Caco-2 (cell line): ENCODE measurements at regions of chr2 and their contacts with region 1.

Region 1: GRCh38 chr2:216059233-216059834 is 22.3 kb downstream of the PECR start:
- DNase-seq: no peak
- H3K4me3 ChIP-seq: no peak overlapping the region
- H3K4me3 Mint-ChIP-seq: no peak overlapping the region
- H3K27ac Mint-ChIP-seq: no peak overlapping the region
- H3K4me1 ChIP-seq: peaks cover 14% of the 10 kb centered on the region
- H3K4me1 Mint-ChIP-seq: peaks cover 5% of the 10 kb centered on the region
- H3K27me3 ChIP-seq: no peaks in the 10 kb centered on the region
- H3K27me3 Mint-ChIP-seq: no peaks in the 10 kb centered on the region
- CTCF ChIP-seq: peak in 1 of 2 experiments; percentile 31

Region 2: GRCh38 chr2:216031960-216032689 is 27.2 kb before region 1 on chr2:
- CTCF ChIA-PET with region 1: no interaction called
- POLR2A ChIA-PET with region 1: no interaction called
- intact Hi-C with region 1: loop called (anchors 1 kb)
- DNase-seq: no peak
- H3K4me3 ChIP-seq: no peak overlapping the region
- H3K4me3 Mint-ChIP-seq: no peak overlapping the region
- H3K27ac Mint-ChIP-seq: no peak overlapping the region
- H3K4me1 ChIP-seq: no peaks in the 10 kb centered on the region
- H3K4me1 Mint-ChIP-seq: no peaks in the 10 kb centered on the region
- H3K27me3 ChIP-seq: no peaks in the 10 kb centered on the region
- H3K27me3 Mint-ChIP-seq: no peaks in the 10 kb centered on the region
- CTCF ChIP-seq: no peak

Region 3: DNA sequence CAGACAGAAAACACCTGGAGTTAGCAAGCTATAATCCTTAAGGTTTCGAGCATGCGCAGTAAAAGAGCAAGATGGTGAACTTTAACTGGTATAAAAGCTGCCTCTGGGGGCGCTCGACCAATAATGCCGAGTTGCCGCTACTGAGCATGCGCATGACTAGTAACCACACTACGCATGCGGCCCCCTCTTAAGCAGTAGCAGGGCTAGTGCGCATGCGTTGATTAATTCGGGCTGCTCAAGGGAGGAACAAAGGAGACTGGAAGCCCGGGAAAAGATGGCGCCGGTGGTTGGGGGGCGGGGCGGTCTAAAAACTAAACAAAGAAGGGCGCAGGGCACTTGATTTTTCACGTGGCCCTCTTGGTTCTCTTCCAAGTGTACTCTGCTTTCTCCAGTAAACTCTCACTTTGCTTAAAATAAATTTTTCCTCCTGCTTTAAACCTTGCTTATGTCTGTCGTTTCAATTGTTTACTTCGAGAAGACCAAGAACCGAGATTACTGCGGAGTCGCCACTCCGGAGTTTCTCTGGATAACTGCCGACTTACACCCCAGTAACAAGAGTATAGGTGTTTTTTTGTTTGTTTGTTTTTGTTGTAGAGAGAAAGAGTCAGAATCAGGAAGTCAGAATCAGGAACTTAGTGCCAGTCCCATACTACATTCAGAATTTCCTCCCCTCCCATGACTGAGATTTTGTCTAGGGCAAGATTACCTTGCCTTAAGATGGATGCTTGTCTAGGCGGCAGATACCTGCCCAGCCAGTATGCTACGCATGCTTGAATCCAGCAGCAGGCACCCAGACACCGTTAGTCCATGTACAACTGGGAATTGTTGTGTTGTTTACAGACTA is 55.6 kb after region 1 on chr2:
- CTCF ChIA-PET with region 1: interaction called, 7 read pairs
- POLR2A ChIA-PET with region 1: no interaction called
- intact Hi-C with region 1: loop called (anchors 1 kb)
- DNase-seq: peak; percentile 98 to 99
- H3K4me3 ChIP-seq: peak overlapping the region; percentile 33
- H3K4me3 Mint-ChIP-seq: peak overlapping the region; percentile 92
- H3K27ac Mint-ChIP-seq: peak overlapping the region; percentile 97
- H3K4me1 ChIP-seq: peaks cover 35% of the 10 kb centered on the region
- H3K4me1 Mint-ChIP-seq: peaks cover 33% of the 10 kb centered on the region
- H3K27me3 ChIP-seq: no peaks in the 10 kb centered on the region
- H3K27me3 Mint-ChIP-seq: no peaks in the 10 kb centered on the region
- CTCF ChIP-seq: peak; percentile 85 to 92

Region 4: GRCh38 chr2:216139884-216140283 is 80.5 kb after region 1 on chr2:
- CTCF ChIA-PET with region 1: no interaction called
- POLR2A ChIA-PET with region 1: no interaction called
- intact Hi-C with region 1: loop called (anchors 1 kb)
- DNase-seq: peak in 1 of 2 experiments; percentile 53
- H3K4me3 ChIP-seq: no peak overlapping the region
- H3K4me3 Mint-ChIP-seq: no peak overlapping the region
- H3K27ac Mint-ChIP-seq: no peak overlapping the region
- H3K4me1 ChIP-seq: no peaks in the 10 kb centered on the region
- H3K4me1 Mint-ChIP-seq: no peaks in the 10 kb centered on the region
- H3K27me3 ChIP-seq: no peaks in the 10 kb centered on the region
- H3K27me3 Mint-ChIP-seq: no peaks in the 10 kb centered on the region
- CTCF ChIP-seq: peak; percentile 41 to 47

Region 5: GRCh38 chr2:216215658-216216390 is 156.5 kb after region 1 on chr2:
- CTCF ChIA-PET with region 1: no interaction called
- POLR2A ChIA-PET with region 1: no interaction called
- intact Hi-C with region 1: no loop called
- DNase-seq: peak in 1 of 2 experiments; percentile 29
- H3K4me3 ChIP-seq: no peak overlapping the region
- H3K4me3 Mint-ChIP-seq: no peak overlapping the region
- H3K27ac Mint-ChIP-seq: no peak overlapping the region
- H3K4me1 ChIP-seq: no peaks in the 10 kb centered on the region
- H3K4me1 Mint-ChIP-seq: no peaks in the 10 kb centered on the region
- H3K27me3 ChIP-seq: no peaks in the 10 kb centered on the region
- H3K27me3 Mint-ChIP-seq: no peaks in the 10 kb centered on the region
- CTCF ChIP-seq: peak; percentile 36 to 51